ENCODE measurements at regions of chr20 and their contacts with region 1.

Region 1: DNA sequence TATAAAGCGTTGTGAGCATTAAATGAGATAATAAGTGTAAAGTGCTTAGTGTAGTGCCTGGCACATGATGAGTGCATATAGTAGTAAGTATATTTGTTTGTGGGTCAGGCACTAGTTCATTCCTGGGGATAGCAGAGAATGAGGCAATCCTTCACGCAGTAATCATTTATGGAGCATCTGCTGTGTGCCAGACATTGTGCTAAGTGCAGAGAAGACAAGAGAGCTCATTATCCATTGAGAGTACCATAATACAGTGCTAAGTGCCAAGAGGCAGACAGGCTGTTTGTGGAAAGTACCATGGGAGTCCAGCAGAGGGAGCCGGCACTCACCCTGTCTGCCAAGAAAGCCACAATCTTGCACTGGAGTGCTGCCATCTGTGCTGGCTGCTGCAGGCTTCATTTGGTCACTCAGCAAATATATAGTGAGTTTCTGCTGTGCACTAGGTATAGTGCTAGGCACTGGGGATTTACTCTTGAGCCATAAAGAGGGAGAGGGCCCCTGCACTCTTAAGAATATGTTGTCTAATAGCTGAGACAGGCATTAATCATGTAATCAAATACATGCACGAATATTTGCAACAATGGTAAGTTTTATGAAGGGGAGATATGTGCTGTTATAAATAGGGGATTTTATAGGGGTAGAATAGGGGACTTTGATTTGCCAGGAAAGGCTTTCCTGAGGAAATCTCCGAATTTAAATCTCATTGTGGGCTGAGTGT is 12.9 kb upstream of the MROH8 start:
- DNase-seq: peak; percentile 79
- H3K4me3 ChIP-seq: no peak overlapping the region
- H3K27ac ChIP-seq: no peak overlapping the region
- H3K27me3 ChIP-seq: no peaks in the 10 kb centered on the region
- CTCF ChIP-seq: peak; percentile 98

Region 2: GRCh38 chr20:37178839-37179670 is 13.2 kb before region 1 on chr20 and contains the starts of genes MROH8 and RPN2:
- CTCF ChIA-PET with region 1: interaction called, 40 read pairs
- POLR2A ChIA-PET with region 1: interaction called, 13 read pairs
- DNase-seq: peak; percentile 97
- H3K4me3 ChIP-seq: peak within 1 kb of the TSS; percentile 88
- H3K27ac ChIP-seq: peak within 1 kb of the TSS; percentile 98
- H3K27me3 ChIP-seq: no peaks in the 10 kb centered on the region
- CTCF ChIP-seq: no peak
- polyA plus RNA-seq, gene MROH8: 2.5 TPM in 2 replicates
- polyA plus RNA-seq, gene RPN2: 488 and 495 TPM in 2 replicates

Region 3: DNA sequence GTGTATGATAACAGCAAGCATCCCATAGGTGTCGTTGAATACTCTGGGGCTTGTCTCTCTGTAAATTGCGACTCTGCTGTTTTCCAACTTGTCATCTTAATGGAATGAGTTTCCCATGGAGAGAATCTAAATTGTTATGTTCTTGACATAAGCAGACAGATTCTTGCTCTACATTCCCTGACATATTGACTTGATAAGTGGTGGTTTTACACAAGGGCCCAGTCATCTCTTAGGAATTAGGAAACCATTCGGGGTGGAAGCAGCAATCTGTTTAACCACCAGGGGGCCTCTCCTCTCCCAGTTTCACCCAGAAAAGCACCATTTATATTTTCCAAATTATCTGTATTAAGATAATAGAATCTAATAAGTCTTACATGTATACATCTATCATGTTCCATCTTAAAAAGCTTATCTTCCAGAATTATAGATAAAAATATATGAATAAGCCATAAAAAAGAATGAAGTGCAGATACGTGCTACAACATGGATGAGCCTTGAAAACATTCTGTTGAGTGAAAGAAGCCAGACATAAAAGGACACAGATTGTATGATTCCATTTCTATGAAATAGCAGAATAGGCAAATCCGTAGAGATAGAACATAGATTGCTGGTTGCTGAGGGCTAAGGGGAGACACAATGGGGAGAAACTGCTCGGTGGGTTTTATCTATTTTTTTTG is 10.1 kb after region 1 on chr20:
- CTCF ChIA-PET with region 1: interaction called, 53 read pairs
- POLR2A ChIA-PET with region 1: interaction called, 3 read pairs
- DNase-seq: peak; percentile 90
- H3K4me3 ChIP-seq: peak overlapping the region; percentile 36
- H3K27ac ChIP-seq: peak overlapping the region; percentile 79
- H3K27me3 ChIP-seq: no peaks in the 10 kb centered on the region
- CTCF ChIP-seq: peak; percentile 91

Region 4: GRCh38 chr20:37209661-37210314 is 17.5 kb after region 1 on chr20:
- CTCF ChIA-PET with region 1: interaction called, 13 read pairs
- POLR2A ChIA-PET with region 1: no interaction called
- DNase-seq: no peak
- H3K4me3 ChIP-seq: no peak overlapping the region
- H3K27ac ChIP-seq: no peak overlapping the region
- H3K27me3 ChIP-seq: no peaks in the 10 kb centered on the region
- CTCF ChIP-seq: no peak

Region 5: GRCh38 chr20:37223053-37223452 is 30.8 kb after region 1 on chr20:
- CTCF ChIA-PET with region 1: interaction called, 11 read pairs
- POLR2A ChIA-PET with region 1: no interaction called
- DNase-seq: peak; percentile 62
- H3K4me3 ChIP-seq: no peak overlapping the region
- H3K27ac ChIP-seq: no peak overlapping the region
- H3K27me3 ChIP-seq: no peaks in the 10 kb centered on the region
- CTCF ChIP-seq: no peak

Region 6: DNA sequence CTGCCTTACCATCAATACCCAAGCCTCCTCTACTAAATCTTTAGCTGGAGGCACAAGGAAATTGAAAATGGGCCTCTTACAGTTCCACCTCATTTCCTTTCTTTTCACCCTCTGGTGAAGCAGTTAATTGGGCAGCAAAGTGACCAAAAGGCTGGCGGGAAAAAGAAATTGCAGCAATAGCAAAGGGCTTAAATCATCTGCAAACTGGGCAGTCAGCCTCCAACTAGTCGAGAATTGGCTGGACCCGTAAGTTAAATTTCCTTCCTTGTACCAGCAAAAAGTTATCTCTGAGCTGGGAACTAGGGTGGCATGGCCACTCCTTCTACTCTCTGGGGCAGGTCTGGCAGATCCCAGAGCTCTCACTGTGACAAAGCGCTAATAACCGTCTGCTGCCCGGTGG is 35.8 kb after region 1 on chr20:
- CTCF ChIA-PET with region 1: interaction called, 11 read pairs
- POLR2A ChIA-PET with region 1: no interaction called
- DNase-seq: no peak
- H3K4me3 ChIP-seq: no peak overlapping the region
- H3K27ac ChIP-seq: no peak overlapping the region
- H3K27me3 ChIP-seq: no peaks in the 10 kb centered on the region
- CTCF ChIP-seq: no peak

Region 7: GRCh38 chr20:37490663-37491350 is 298.5 kb after region 1 on chr20:
- CTCF ChIA-PET with region 1: interaction called, 11 read pairs
- POLR2A ChIA-PET with region 1: no interaction called
- DNase-seq: no peak
- H3K4me3 ChIP-seq: no peak overlapping the region
- H3K27ac ChIP-seq: no peak overlapping the region
- H3K27me3 ChIP-seq: peaks cover 15% of the 10 kb centered on the region
- CTCF ChIP-seq: no peak